ENCODE measurements at regions of chr7 and their contacts with region 1.

Region 1: DNA sequence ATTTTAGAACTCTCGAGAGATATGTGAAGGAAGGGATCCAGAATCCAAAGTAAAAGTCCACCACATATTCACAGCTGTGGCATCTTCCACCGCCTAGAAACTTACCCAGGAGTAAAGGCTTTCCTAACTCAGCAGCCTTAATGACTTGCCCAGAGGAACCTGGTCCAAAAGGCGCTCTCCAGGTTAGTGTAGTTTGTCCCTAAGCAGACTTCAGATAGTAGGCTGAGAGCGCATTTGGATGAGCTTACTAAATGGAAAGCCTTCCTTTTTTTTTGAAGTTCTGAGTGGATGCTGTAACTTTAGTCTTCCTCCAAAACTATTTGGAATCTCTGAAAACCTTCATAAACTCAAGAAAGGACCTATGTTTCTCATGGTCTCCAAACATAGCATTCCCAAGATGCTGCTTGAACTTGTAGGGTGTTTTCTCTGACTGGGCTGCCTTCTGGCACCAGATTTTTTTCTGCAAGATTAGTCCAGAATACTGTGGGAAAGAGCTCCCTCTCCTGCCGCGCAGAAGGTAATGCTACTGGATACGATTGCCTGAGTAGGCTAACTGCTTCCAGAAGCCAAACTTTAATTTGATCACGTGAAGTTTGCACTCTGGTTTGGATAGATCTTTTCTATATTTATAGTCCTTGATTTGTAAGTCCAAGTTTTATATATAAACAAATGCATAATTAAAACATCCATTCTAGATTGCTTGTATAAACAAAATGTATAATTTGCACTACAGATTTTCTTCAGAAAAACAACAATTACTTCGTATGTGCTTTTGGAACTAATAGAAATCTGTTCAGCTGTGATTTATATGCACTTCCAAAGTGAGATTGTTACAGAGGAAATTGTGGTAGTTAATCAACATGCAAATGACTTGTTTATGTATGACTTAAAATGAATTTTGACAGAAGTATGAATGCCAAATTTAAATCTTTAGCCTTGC is 19.6 kb upstream of the GPR37 start:
- DNase-seq: peak; percentile 79
- H3K4me3 ChIP-seq: no peak overlapping the region
- H3K27ac ChIP-seq: no peak overlapping the region
- H3K4me1 ChIP-seq: no peaks in the 10 kb centered on the region
- H3K27me3 ChIP-seq: no peaks in the 10 kb centered on the region
- CTCF ChIP-seq: peak; percentile 91

Region 2: GRCh38 chr7:123797673-123798527 is 987.2 kb before region 1 on chr7:
- CTCF ChIA-PET with region 1: interaction called, 3 read pairs
- POLR2A ChIA-PET with region 1: no interaction called
- intact Hi-C with region 1: loop called (anchors 10 kb)
- DNase-seq: peak; percentile 70
- H3K4me3 ChIP-seq: no peak overlapping the region
- H3K27ac ChIP-seq: no peak overlapping the region
- H3K4me1 ChIP-seq: no peaks in the 10 kb centered on the region
- H3K27me3 ChIP-seq: no peaks in the 10 kb centered on the region
- CTCF ChIP-seq: peak; percentile 72

Region 3: GRCh38 chr7:123966936-123967335 is 818.2 kb before region 1 on chr7:
- CTCF ChIA-PET with region 1: no interaction called
- POLR2A ChIA-PET with region 1: no interaction called
- intact Hi-C with region 1: loop called (anchors 10 kb)
- DNase-seq: peak; percentile 69
- H3K4me3 ChIP-seq: no peak overlapping the region
- H3K27ac ChIP-seq: no peak overlapping the region
- H3K4me1 ChIP-seq: peaks cover 13% of the 10 kb centered on the region
- H3K27me3 ChIP-seq: no peaks in the 10 kb centered on the region
- CTCF ChIP-seq: peak; percentile 52

Region 4: GRCh38 chr7:124171068-124171467 is 614.1 kb before region 1 on chr7:
- CTCF ChIA-PET with region 1: no interaction called
- POLR2A ChIA-PET with region 1: no interaction called
- intact Hi-C with region 1: loop called (anchors 5 kb)
- DNase-seq: peak; percentile 31
- H3K4me3 ChIP-seq: no peak overlapping the region
- H3K27ac ChIP-seq: no peak overlapping the region
- H3K4me1 ChIP-seq: no peaks in the 10 kb centered on the region
- H3K27me3 ChIP-seq: no peaks in the 10 kb centered on the region
- CTCF ChIP-seq: peak; percentile 50

Region 5: DNA sequence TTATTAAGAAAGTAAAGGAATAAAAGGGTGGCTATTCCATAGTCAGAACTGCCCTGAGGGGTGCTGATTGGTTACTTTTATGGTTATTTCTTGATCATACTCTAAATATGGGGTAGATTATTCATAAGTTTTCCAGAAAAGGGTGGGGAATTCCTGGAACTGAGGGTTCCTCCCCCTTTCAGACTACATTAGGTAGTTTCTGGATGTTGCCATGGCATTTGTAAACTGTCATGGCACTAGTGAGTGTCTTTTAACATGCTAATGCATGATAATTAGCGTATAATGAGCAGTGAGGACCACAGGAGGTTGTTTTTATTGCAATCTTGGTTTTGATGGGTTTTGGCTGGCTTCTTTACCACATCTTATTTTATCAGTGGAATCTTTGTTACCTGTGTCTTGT is 171.0 kb after region 1 on chr7:
- CTCF ChIA-PET with region 1: no interaction called
- POLR2A ChIA-PET with region 1: no interaction called
- intact Hi-C with region 1: no loop called
- DNase-seq: no peak
- H3K4me3 ChIP-seq: no peak overlapping the region
- H3K27ac ChIP-seq: no peak overlapping the region
- H3K4me1 ChIP-seq: peaks cover 7% of the 10 kb centered on the region
- H3K27me3 ChIP-seq: no peaks in the 10 kb centered on the region
- CTCF ChIP-seq: no peak